Activated CD4-positive, alpha-beta T cell treated with anti-CD3 and anti-CD28 coated beads, Interleukin-2, amount 10 ng/mL, durations not matched to agents 24 days and 14 days (primary cell): ENCODE measurements at regions of chr5 and their contacts with region 1.

Region 1: DNA sequence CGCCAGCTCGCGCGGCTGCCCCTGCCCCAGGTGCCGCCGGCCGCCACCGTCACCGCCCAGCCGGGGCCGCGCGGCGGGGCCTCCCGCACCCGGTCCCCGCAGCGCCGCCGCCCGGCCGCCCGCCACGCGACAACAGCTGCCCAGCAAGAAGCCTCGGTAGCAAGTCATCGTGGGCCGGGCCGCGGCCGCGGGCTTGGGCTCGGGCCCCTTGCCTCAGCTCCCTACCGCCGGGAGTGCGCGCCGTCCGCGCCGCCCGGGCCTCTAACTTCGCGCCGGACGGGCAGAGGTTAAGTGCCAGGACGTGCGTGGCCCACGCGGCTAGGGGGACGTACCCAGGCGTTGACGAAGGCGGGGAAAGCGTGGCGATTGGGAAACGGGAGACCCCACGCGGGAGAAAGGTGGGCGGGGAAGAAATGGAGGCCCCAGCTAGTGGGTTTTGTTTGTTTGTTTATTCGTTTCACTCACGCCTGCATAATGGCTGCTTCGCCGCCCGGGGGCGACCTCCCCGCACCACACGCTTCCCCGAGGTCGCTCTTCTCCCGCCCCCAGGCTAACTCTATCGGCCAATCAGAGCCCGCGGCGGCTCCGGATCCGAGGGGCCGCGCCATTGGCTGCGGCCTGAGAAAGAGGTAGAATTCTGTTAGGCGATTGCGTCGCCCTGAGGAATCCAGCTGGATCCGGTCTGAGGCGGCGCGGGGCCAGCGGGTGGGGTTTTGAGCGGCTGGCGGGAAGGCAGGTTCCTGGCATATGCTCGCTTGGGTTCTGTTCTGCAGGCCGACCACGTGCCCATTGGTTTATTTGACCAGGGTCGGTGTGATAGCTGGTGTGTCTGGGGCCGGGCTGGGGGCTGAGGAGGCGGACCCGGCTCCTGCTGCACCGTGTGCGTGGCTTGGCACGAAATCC is at the start of gene NADK2:
- DNase-seq: peak; percentile 98
- H3K4me3 Mint-ChIP-seq: peak within 1 kb of the TSS; percentile 87
- H3K27ac Mint-ChIP-seq: peak within 1 kb of the TSS; percentile 94
- H3K4me1 Mint-ChIP-seq: peaks cover 28% of the 10 kb centered on the region
- H3K27me3 Mint-ChIP-seq: peaks cover 7% of the 10 kb centered on the region
- total RNA-seq, gene NADK2: 23.0 and 25.8 TPM in 2 replicates

Region 2: DNA sequence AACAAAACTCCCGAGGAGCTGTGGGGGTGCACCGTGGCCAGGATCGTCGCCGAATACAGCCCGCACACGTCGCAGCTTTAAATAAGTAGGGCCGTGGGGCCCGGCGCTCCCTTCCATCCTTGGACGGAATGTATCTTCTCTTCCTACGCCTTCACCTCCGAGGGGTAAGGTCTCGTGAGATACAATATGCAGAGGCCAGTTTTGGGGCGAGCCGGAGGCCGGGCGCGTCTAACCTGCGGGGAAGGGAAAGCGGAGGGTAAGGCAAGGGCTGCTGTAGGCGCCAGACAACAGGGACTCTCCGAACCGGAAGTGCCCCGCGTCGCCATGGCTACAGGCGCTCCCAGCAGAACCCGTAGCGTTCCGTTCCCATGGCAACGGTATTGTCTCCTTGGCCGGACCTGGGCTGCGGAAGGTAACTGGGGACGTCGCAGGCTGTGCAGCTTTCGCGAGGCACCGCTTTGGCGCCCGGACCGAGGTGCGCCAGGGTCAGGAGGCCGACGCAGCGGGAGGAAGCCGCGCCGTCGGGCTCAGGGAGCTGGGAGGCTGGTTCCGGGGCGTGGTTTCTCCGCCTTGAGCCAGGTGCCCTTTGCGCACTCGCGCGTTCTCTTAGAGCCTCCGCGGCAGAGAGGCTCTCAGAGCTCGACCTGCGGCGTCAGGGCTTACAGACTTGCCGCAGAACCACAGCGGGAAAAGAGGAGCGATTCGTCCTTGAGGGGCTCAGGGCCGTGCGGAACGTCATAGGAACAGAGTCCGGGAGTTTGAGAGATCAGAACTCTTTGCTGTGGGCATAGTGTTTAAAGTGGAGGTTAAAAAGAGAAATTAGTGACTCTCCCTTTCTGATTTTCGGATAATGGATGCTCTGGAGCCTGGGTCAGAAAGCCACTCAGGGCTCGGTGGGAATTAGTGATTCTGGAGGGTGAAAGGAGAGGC is 1402.8 kb before region 1 on chr5 and contains the start of gene TTC23L:
- intact Hi-C with region 1: loop called (anchors 2 kb)
- DNase-seq: peak; percentile 97
- H3K4me3 Mint-ChIP-seq: peak within 1 kb of the TSS; percentile 89
- H3K27ac Mint-ChIP-seq: peak within 1 kb of the TSS; percentile 79
- H3K4me1 Mint-ChIP-seq: peaks cover 12% of the 10 kb centered on the region
- H3K27me3 Mint-ChIP-seq: peaks cover 10% of the 10 kb centered on the region
- total RNA-seq, gene TTC23L: not detected in 2 replicates